ENCODE measurements at regions of chr9 and their contacts with region 1.

Region 1: DNA sequence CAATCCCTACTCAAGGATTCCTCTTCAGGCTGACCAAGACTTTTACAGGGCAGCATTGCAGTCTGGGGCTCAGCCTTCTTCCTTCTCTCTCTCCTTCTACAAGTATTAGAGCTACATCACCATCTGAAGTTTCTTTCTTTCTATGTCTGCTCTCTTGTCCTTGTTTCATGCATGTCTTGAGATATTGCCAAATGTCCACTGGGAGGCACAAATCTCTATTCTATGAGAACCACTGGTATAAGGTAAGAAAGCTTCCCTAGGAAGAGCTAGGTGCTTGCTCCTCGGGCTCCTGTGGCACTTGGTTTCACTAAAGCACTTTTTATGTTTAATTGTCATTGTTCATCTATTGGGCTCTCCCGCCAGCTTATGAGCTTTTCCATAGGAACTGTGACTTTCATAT is 289.2 kb upstream of the PCSK5 start:
- DNase-seq: no peak
- H3K4me3 Mint-ChIP-seq: no peak overlapping the region
- H3K27ac Mint-ChIP-seq: no peak overlapping the region
- H3K4me1 Mint-ChIP-seq: no peaks in the 10 kb centered on the region
- H3K27me3 Mint-ChIP-seq: peaks cover under 1% of the 10 kb centered on the region

Region 2: DNA sequence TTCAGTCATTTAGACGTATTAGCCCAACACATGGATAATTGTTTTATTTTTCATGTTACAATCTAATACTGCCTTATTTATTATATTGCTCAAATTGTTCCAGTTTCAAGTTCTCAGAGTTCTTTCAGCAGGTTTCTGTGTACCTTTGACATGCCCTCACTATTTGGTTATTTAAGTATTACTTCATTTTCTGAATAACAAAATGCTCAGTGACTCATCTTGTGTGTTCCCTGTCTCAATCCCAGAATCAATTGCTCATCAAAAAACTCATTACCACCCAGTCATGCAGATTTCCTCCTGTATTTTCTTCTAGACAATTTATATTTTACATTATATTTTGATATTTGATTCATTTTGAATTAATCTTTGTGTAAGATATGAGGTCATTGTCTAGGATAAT is 1887.0 kb before region 1 on chr9:
- intact Hi-C with region 1: loop called (anchors 5 kb)
- DNase-seq: no peak
- H3K4me3 Mint-ChIP-seq: no peak overlapping the region
- H3K27ac Mint-ChIP-seq: no peak overlapping the region
- H3K4me1 Mint-ChIP-seq: no peaks in the 10 kb centered on the region
- H3K27me3 Mint-ChIP-seq: no peaks in the 10 kb centered on the region

Measured in activated T-helper 1 cell treated with anti-CD3 and anti-CD28 coated beads, Interleukin-12 subunit alpha, Interleukin-12 subunit beta, Interleukin-2, Interleukin-4 antibody, amounts not matched to agents 30 ng/mL and 10 ng/mL and 1 ng/mL, durations not matched to agents 14 hours and 24 hours and 36 hours (primary cell).